GM23248 (cell line): ENCODE measurements at regions of chr10 and their contacts with region 1.

Region 1: DNA sequence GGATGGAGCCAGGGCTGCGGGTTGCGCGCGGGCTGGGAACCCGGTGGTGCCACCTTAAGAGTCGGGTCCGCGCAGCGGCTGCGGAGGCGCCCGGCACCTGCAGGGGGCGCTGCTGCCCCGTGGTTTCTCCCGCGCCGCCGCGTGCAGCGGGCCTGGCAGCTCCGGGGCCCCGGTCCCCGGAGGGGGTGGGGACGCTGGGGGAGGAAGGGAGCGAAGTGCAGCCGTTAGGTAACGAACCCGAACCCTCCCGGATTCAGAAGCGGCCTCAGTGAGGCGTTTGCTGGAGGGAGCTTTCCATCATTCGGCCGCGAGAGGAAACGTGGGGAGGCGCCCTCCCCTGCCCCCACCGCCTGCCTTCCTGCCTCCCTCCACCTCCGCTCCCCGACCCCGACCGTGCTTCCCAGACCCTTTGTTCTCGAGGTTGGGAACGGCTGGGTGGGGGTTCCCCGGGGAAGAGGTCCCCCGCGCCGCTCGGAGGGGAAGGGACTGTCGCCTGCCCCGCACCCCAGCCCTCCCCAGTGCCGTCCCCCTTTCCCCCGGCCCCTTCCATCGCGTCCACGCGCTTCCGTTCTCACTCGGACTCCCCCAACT is 29.6 kb downstream of the SKIDA1 start:
- DNase-seq: peak; percentile 84
- H3K4me3 ChIP-seq: peak overlapping the region; percentile 71
- H3K27ac ChIP-seq: no peak overlapping the region
- H3K4me1 ChIP-seq: no peaks in the 10 kb centered on the region
- H3K27me3 ChIP-seq: no peaks in the 10 kb centered on the region; the same call in 1 of the 2 replicates

Region 2: DNA sequence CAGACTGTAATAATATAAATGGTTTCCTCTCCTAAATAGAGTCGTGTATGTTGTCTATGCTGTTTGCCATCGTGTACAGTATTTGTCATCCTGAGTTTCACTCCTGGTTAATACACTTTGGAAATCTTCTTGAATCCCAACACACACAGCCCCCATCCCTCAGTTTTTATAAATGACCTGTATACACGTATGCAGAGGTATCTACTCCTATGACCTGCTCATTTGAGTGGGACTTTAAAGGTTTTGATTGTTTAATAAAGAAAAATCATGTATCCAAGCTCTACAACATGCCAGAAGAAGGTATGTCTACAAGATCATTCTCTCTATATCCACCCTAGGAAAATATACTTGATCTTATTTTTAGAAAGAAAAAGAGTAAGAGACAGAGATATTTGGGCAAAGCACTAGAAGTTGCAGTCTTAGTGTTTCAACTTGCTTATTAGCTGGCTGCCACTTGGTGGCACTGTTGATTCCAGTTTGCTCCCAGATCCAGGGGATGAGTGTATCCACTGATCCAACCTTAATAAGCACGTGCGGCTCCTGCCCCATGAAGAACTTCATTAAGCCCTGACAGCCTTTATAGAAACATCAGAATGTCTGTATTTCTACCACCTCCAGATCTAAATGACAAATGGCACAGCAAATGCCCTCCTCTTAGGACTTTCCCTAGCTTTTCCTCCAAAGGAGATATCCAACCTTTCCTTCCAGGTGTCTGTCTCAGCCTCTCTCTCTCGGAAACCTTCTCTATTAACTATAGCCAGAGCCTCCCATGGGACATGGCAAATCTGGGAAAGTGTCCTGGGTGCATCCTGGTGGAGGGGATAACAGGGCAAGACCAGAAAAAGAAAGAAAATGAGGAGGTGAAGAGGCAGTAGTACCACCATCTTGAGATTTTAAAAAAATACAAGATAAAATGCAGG is 417.2 kb before region 1 on chr10:
- in situ Hi-C with region 1: loop called (anchors 25 kb)
- DNase-seq: peak; percentile 78
- H3K4me3 ChIP-seq: no peak overlapping the region
- H3K27ac ChIP-seq: no peak overlapping the region
- H3K4me1 ChIP-seq: 0 out of 2 replicates have a peak, but pooled peaks cover 4% of the 10 kb centered on the region
- H3K27me3 ChIP-seq: no peaks in the 10 kb centered on the region; the same call in 1 of the 2 replicates

Region 3: GRCh38 chr10:21285742-21286331 is 210.0 kb before region 1 on chr10:
- in situ Hi-C with region 1: loop called (anchors 5 kb)
- DNase-seq: peak; percentile 7
- H3K4me3 ChIP-seq: no peak overlapping the region
- H3K27ac ChIP-seq: no peak overlapping the region
- H3K4me1 ChIP-seq: 0 out of 2 replicates have a peak, but pooled peaks cover under 1% of the 10 kb centered on the region
- H3K27me3 ChIP-seq: no peaks in the 10 kb centered on the region

Region 4: GRCh38 chr10:21300551-21300950 is 195.3 kb before region 1 on chr10:
- in situ Hi-C with region 1: no loop called
- DNase-seq: no peak
- H3K4me3 ChIP-seq: no peak overlapping the region
- H3K27ac ChIP-seq: no peak overlapping the region
- H3K4me1 ChIP-seq: no peaks in the 10 kb centered on the region
- H3K27me3 ChIP-seq: no peaks in the 10 kb centered on the region

Region 5: DNA sequence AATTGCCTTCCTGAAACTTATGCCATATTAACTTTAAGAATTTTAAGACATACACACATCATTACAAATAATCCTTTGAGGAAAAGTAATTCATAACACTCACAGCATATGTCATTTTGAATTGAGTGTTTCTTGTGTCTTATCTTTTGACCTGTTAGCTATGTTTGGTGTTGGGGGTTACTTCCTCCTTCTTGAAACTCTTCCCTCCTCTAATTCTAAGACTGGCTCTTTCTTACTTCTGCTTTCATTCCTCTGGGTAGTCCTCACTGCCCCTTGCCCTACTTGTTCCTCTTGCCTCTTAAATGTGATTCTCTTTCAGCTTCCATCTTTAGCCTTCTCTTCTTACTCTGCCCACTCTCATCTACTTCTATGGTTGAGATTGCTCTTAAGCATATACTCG is 1246.8 kb after region 1 on chr10:
- in situ Hi-C with region 1: no loop called
- DNase-seq: no peak
- H3K4me3 ChIP-seq: no peak overlapping the region
- H3K27ac ChIP-seq: no peak overlapping the region
- H3K4me1 ChIP-seq: peaks cover 5% of the 10 kb centered on the region; the same call in 1 of the 2 replicates
- H3K27me3 ChIP-seq: no peaks in the 10 kb centered on the region